K562 (cell line): ENCODE measurements at regions of chrX and their contacts with region 1.

Region 1: DNA sequence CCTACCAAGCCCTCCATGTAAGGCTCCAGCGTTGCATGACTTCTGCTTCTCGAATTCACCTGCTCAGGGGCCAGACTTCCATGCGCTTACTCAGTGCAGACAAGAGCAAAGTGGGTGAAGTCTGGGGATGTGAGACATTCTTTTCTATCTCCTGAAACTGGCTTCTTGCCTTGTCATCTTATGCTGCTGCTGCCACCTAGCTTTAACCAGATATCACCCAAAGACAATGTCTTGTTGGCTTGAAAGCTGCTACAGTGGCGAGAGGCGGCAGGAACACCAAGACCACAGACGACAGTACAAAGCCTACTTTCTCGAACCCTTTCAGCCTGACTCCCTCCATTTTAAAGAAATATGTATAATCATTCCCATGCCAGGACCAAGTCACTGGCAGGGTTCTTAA is 103.7 kb upstream of the ADGRG2 start:
- DNase-seq: peak in 2 of 4 experiments; percentile 8 to 22
- ATAC-seq: peak; percentile 67
- H3K4me3 ChIP-seq: no peak overlapping the region
- H3K27ac ChIP-seq: no peak overlapping the region
- H3K4me1 ChIP-seq: no peaks in the 10 kb centered on the region
- H3K27me3 ChIP-seq: no peaks in the 10 kb centered on the region
- CTCF ChIP-seq: peak; percentile 21 to 40 (median 35); a peak in 3 of 6 replicates
- EP300 ChIP-seq: no peak
- POLR2A ChIP-seq: no peak
- RAD21 ChIP-seq: peak in 1 of 2 experiments; percentile 49; a peak in 2 of 4 replicates

Region 2: DNA sequence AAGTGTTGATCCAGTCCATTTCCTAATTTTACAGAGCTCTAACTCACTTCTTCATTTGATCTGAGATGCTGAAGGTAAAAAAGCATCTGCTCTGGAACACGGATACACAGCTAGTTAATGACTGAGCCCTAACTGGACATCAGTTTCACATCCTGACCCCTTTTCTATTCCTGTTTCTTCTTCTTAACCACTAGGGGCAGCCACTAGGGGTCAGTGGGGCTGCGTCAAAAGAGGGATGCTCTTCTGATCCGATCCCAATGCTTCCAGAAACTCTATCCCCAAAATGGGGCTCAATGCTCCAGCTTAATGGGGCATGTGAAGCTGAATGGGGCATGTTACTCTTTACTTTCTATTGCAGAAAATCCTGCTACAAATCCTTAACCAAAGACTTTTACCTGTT is 208.7 kb before region 1 on chrX:
- CTCF ChIA-PET with region 1: interaction called, 3 read pairs
- POLR2A ChIA-PET with region 1: no interaction called
- in situ Hi-C with region 1: no loop called
- intact Hi-C with region 1: loop called (anchors 1 kb)
- DNase-seq: peak; percentile 30 to 49 (median 42)
- ATAC-seq: peak; percentile 75
- H3K4me3 ChIP-seq: no peak overlapping the region
- H3K27ac ChIP-seq: no peak overlapping the region
- H3K4me1 ChIP-seq: no peaks in the 10 kb centered on the region
- H3K27me3 ChIP-seq: peaks cover 0 to 14% of the 10 kb centered on the region in 2 experiments; a peak in 4 of 5 replicates
- CTCF ChIP-seq: peak; percentile 56 to 71 (median 67)
- EP300 ChIP-seq: no peak
- POLR2A ChIP-seq: no peak
- RAD21 ChIP-seq: peak in 1 of 2 experiments; percentile 62; a peak in 2 of 4 replicates

Region 3: DNA sequence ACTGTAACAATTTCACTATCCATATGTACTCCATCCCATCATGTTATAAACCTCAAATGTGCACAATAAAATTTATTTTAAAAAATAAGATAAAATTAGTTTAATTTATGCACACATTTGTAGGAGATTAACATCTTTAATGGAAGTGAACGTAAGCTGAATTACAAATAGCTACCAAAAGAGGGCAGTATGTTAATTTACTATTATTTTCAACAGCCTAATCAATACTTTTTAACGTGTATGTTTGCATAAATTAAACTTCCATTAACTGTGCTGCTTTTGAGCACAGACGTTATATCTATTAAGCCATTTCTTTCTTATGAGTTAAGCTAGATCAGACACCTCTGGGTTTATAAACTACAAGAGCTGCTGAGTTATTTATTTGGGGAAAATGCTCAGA is 185.6 kb before region 1 on chrX:
- CTCF ChIA-PET with region 1: no interaction called
- POLR2A ChIA-PET with region 1: no interaction called
- in situ Hi-C with region 1: no loop called
- intact Hi-C with region 1: loop called (anchors 10 kb)
- DNase-seq: no peak
- ATAC-seq: no peak
- H3K4me3 ChIP-seq: no peak overlapping the region
- H3K27ac ChIP-seq: no peak overlapping the region
- H3K4me1 ChIP-seq: no peaks in the 10 kb centered on the region
- H3K27me3 ChIP-seq: no peaks in the 10 kb centered on the region
- CTCF ChIP-seq: peak in 2 of 3 experiments; percentile 10 to 25; a peak in 2 of 6 replicates
- EP300 ChIP-seq: no peak
- POLR2A ChIP-seq: no peak
- RAD21 ChIP-seq: peak in 1 of 2 experiments; percentile 13; a peak in 1 of 4 replicates